MCF 10A (cell line): ENCODE measurements at regions of chr6 and their contacts with region 1.

Region 1: GRCh38 chr6:26156076-26156849 is 69.0 kb downstream of the HFE start:
- DNase-seq: peak; percentile 91
- H3K4me3 Mint-ChIP-seq: peak overlapping the region; percentile 82
- H3K27ac Mint-ChIP-seq: peak overlapping the region; percentile 64
- H3K4me1 Mint-ChIP-seq: peaks cover 23% of the 10 kb centered on the region
- H3K27me3 Mint-ChIP-seq: no peaks in the 10 kb centered on the region
- CTCF ChIP-seq: no peak

Region 2: GRCh38 chr6:25962149-25963127 is 193.8 kb before region 1 on chr6 and contains the start of gene TRIM38:
- CTCF ChIA-PET with region 1: no interaction called
- POLR2A ChIA-PET with region 1: no interaction called
- intact Hi-C with region 1: no loop called
- DNase-seq: peak; percentile 90
- H3K4me3 Mint-ChIP-seq: peak within 1 kb of the TSS; percentile 83
- H3K27ac Mint-ChIP-seq: peak within 1 kb of the TSS; percentile 98
- H3K4me1 Mint-ChIP-seq: peaks cover 47% of the 10 kb centered on the region
- H3K27me3 Mint-ChIP-seq: no peaks in the 10 kb centered on the region
- CTCF ChIP-seq: no peak
- total RNA-seq, gene TRIM38: 5.4 and 6.7 TPM in 2 replicates

Region 3: DNA sequence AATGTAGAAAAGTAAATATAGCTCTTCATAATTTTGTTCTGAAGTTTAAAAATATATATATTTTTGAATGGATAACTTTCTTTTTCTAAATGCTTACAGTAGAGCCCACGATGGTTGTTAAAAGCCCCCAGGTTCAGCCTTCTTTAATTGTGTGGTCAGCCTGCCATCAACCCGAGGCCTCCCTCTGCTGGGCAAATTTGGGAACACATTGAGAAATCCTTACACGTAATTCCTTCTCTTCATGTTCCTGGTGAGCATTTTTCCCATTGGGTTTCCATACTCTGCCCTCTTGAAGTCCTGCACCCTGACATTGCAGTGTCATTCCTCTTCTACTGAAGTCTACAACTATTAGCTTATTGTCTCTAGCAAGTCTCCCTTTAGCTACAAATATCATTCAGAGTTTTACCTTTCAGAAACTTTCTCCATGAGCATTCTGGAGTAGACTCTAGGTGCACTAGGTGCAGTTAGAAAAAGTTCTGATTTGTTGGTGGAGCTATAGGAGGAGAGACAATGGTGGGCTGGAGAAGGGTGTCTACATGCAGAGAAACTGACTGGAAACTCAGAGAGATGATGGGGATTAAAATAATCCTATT is 153.1 kb before region 1 on chr6:
- CTCF ChIA-PET with region 1: no interaction called
- POLR2A ChIA-PET with region 1: no interaction called
- intact Hi-C with region 1: no loop called
- DNase-seq: peak; percentile 64
- H3K4me3 Mint-ChIP-seq: no peak overlapping the region
- H3K27ac Mint-ChIP-seq: no peak overlapping the region
- H3K4me1 Mint-ChIP-seq: peaks cover under 1% of the 10 kb centered on the region
- H3K27me3 Mint-ChIP-seq: no peaks in the 10 kb centered on the region
- CTCF ChIP-seq: peak; percentile 63

Region 4: GRCh38 chr6:26045065-26045927 is 111.0 kb before region 1 on chr6:
- CTCF ChIA-PET with region 1: no interaction called
- POLR2A ChIA-PET with region 1: interaction called, 163 read pairs
- intact Hi-C with region 1: no loop called
- DNase-seq: peak; percentile 95
- H3K4me3 Mint-ChIP-seq: peak overlapping the region; percentile 80
- H3K27ac Mint-ChIP-seq: peak overlapping the region; percentile 86
- H3K4me1 Mint-ChIP-seq: peaks cover 16% of the 10 kb centered on the region
- H3K27me3 Mint-ChIP-seq: no peaks in the 10 kb centered on the region
- CTCF ChIP-seq: no peak

Region 5: DNA sequence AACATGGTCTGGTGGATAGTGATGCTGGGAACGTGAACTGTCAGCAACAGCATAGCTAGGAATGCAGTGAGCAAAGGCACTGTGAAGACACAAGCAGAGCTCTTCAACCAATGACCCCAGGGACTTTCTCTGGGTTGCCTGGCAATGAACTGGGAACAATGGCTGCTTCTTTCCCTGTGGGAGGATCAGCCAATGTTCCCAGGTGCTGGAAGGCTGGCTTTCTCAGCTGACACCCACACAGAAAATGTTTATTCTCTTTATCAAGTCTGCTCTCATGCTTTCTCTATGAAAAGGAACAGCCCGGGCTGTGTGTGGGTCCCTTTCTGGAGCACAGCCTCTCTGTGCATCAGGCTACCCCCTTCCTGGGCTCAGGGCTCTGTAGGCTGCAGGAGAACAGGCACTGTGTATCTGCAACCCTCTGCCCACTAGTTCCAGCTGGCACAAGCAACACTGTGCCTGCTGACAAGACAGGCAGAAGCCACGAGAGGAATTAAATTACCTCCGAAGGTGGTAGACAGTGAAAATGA is 14.8 kb before region 1 on chr6:
- CTCF ChIA-PET with region 1: no interaction called
- POLR2A ChIA-PET with region 1: interaction called, 48 read pairs
- intact Hi-C with region 1: no loop called
- DNase-seq: no peak
- H3K4me3 Mint-ChIP-seq: no peak overlapping the region
- H3K27ac Mint-ChIP-seq: no peak overlapping the region
- H3K4me1 Mint-ChIP-seq: peaks cover 9% of the 10 kb centered on the region
- H3K27me3 Mint-ChIP-seq: no peaks in the 10 kb centered on the region
- CTCF ChIP-seq: no peak

Region 6: DNA sequence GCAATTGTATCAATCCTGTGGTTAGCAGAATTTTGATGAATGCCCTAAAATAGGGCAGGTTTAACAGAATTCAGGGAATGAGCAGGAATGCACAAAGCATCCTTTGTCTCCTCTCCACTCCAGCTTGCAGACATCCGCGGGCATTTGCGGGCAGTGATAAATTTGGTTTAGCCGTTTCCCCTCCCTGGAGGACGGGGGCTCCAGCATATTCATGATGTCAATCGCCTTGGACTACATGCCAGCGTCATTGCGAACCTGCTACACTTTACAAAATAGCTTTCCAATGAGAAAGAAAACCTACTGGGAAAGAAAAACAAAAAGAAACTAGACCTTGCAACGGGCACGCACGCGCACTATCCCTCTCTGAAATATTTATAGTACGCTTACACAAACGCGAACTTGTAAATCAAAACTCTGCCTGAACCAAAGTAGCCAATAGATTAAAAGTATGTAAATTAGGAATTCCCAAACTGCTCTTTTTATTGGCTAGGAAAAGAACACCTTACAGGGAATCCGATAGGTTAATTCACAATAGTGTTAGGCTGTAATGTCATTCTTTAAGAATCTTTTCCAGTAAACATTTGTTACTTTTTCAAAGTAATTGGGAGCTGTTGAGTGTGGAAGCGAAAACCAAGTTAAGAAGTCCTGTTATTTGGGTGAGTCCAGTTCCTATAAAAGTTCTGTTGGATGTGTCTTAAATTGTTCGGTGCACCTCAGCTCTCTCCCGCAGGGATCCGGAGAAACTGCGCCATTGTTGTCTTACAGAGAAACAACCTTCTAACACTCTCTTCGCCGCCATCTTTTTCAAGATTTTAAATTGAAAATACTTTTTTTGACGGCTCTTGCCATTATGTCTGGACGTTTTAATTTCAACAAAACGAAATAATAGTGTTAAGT is 67.6 kb after region 1 on chr6:
- CTCF ChIA-PET with region 1: no interaction called
- POLR2A ChIA-PET with region 1: interaction called, 65 read pairs
- intact Hi-C with region 1: no loop called
- DNase-seq: peak; percentile 91
- H3K4me3 Mint-ChIP-seq: no peak overlapping the region
- H3K27ac Mint-ChIP-seq: no peak overlapping the region
- H3K4me1 Mint-ChIP-seq: peaks cover 6% of the 10 kb centered on the region
- H3K27me3 Mint-ChIP-seq: no peaks in the 10 kb centered on the region
- CTCF ChIP-seq: no peak

Region 7: GRCh38 chr6:26322645-26323482 is 166.6 kb after region 1 on chr6:
- CTCF ChIA-PET with region 1: no interaction called
- POLR2A ChIA-PET with region 1: no interaction called
- intact Hi-C with region 1: no loop called
- DNase-seq: peak; percentile 85
- H3K4me3 Mint-ChIP-seq: peak overlapping the region; percentile 76
- H3K27ac Mint-ChIP-seq: peak overlapping the region; percentile 75
- H3K4me1 Mint-ChIP-seq: peaks cover 7% of the 10 kb centered on the region
- H3K27me3 Mint-ChIP-seq: no peaks in the 10 kb centered on the region
- CTCF ChIP-seq: no peak

Region 8: GRCh38 chr6:27132532-27133280 is 976.4 kb after region 1 on chr6:
- CTCF ChIA-PET with region 1: no interaction called
- POLR2A ChIA-PET with region 1: interaction called, 80 read pairs
- intact Hi-C with region 1: no loop called
- DNase-seq: peak; percentile 99
- H3K4me3 Mint-ChIP-seq: no peak overlapping the region
- H3K27ac Mint-ChIP-seq: no peak overlapping the region
- H3K4me1 Mint-ChIP-seq: peaks cover 11% of the 10 kb centered on the region
- H3K27me3 Mint-ChIP-seq: no peaks in the 10 kb centered on the region
- CTCF ChIP-seq: no peak

Region 9: DNA sequence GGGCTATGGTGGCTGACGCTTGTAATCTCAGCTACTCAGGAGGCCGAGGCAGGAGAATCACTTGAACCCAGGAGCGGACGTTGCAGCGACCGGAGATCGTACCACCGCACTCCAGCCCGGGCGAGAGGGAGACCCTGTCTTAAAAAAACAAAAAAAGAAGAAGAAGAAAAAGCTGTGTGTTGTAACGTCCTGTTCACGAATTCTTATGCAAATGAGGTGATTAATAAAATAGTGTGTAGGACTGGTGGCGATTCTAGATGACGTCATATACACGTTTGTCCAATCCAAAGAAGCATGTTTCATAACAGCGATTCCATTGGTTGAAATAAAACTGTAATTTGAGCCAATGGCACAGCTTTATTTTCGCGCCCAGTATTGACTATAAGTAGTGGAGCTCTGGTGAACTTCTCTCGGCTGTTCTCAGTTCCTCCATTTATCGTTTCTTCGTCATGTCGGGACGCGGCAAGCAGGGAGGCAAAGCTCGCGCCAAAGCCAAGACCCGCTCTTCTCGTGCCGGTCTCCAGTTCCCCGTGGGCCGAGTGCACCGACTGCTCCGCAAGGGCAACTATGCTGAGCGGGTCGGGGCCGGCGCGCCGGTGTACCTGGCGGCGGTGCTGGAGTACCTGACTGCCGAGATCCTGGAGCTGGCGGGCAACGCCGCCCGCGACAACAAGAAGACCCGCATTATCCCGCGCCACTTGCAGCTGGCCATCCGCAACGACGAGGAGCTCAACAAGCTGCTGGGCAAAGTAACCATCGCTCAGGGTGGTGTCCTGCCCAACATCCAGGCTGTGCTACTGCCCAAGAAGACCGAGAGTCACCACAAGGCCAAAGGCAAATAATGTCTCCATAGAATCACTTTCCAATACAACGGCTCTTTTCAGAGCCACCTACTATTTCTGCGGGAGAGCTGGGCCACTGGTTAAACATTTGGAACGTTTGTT is 1708.9 kb after region 1 on chr6:
- CTCF ChIA-PET with region 1: no interaction called
- POLR2A ChIA-PET with region 1: interaction called, 54 read pairs
- intact Hi-C with region 1: no loop called
- DNase-seq: peak; percentile 96
- H3K4me3 Mint-ChIP-seq: peak overlapping the region; percentile 91
- H3K27ac Mint-ChIP-seq: peak overlapping the region; percentile 97
- H3K4me1 Mint-ChIP-seq: no peaks in the 10 kb centered on the region
- H3K27me3 Mint-ChIP-seq: no peaks in the 10 kb centered on the region
- CTCF ChIP-seq: no peak